Posterior vena cava (tissue), 2 donors: ENCODE measurements at regions of chr12 and their contacts with region 1.

Region 1: GRCh38 chr12:29879606-29880308 is 96.0 kb upstream of the TMTC1 start:
- DNase-seq: no peak

Region 2: DNA sequence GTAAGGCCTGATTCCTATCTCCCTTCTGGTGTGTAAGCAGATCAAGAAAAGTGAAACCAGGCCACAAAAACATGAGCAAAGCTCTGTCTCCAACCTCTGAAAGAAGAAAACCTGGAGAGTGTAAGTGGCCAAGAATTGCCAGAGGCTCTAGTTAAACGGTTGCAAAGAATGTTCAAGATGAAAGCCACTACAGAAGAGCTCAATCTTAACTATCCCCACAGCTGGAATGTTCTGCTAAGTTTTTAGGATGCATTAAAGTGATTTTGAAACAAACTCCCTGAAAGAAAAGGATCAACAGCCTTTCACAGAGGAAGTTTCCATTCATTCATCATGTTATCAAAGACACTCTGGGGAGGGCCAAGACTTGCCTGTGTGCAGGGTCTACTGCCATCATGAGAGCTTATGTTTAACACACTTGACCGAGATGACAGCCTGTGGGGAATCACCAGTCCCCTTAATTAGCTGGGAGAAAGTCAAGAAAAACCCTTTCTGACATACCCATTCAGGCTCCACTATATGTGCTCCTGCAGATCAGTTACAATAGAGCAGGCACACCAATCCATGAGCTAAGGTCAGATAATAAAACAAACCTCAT is 254.3 kb before region 1 on chr12:
- intact Hi-C with region 1: loop called in 1 of 2 experiments (anchors 5 kb)
- DNase-seq: no peak